Heart right ventricle (tissue), 16 donors: ENCODE measurements at regions of chr5 and their contacts with region 1.

Region 1: DNA sequence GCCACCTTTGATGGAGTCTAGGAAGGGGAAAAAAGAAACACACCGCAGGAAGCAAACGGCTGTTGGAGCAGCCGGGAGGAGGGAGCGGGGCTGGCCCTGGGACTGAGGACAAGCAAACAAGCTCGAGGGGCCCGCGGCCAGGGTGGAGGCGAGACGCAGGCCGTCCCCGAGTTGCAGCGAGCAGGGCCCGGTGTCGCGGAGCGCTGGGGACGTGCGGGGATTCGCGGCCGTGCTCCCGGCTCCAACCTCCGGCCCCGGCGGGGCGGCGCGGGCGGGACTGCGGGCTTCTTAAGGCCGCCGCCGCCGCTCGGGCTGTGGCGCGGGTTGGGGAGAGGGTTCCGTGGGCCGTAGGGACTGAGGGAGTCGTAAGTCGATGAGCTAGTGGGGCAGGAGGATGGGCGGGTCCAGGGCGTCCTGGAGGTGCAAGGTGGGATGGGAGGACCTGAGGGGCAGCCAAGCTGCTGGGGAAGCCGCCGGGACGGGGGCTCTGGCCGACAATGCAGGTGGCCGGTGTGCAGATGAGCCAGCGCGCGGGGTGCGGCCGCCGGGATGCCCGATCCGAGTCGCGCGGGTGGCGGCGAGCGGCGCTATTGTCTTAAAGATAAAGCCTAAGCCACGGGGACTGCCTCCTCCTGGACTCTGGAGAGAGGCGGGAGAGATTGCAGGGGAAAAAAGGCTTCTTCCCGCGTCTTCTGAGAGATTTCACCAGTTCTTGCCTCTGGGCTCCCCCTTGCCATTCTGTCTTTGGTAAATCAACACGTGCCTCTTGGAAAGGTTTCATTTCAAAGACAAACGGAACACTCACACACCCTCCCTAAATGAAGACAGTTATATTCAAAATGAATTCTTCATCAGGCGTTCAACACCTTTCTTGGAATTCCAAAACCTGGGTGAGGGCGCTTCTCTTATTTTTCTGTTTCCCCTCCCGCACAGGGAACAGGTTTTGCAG is 1.6 kb upstream of the HAPLN1 start:
- DNase-seq: peak; percentile 46 to 51
- ATAC-seq: peak; percentile 68 to 89 (median 78)
- H3K4me3 ChIP-seq: peak overlapping the region; percentile 36 to 63 (median 52)
- H3K27ac ChIP-seq: peak overlapping the region in 5 of 10 donors; percentile 44 to 75 (median 57)
- H3K4me1 ChIP-seq: peaks cover 0 to 12% (median 9%) of the 10 kb centered on the region in 9 donors
- H3K27me3 ChIP-seq: peaks cover 0 to 76% (median 41%) of the 10 kb centered on the region in 7 donors
- CTCF ChIP-seq: peak in 7 of 9 donors; percentile 17 to 52 (median 32)

Region 2: GRCh38 chr5:83645936-83646335 is 76.3 kb before region 1 on chr5:
- intact Hi-C with region 1: no loop called
- DNase-seq: no peak
- ATAC-seq: no peak
- H3K4me3 ChIP-seq: no peak overlapping the region
- H3K27ac ChIP-seq: no peak overlapping the region
- H3K4me1 ChIP-seq: no peaks in the 10 kb centered on the region
- H3K27me3 ChIP-seq: no peaks in the 10 kb centered on the region
- CTCF ChIP-seq: no peak

Region 3: DNA sequence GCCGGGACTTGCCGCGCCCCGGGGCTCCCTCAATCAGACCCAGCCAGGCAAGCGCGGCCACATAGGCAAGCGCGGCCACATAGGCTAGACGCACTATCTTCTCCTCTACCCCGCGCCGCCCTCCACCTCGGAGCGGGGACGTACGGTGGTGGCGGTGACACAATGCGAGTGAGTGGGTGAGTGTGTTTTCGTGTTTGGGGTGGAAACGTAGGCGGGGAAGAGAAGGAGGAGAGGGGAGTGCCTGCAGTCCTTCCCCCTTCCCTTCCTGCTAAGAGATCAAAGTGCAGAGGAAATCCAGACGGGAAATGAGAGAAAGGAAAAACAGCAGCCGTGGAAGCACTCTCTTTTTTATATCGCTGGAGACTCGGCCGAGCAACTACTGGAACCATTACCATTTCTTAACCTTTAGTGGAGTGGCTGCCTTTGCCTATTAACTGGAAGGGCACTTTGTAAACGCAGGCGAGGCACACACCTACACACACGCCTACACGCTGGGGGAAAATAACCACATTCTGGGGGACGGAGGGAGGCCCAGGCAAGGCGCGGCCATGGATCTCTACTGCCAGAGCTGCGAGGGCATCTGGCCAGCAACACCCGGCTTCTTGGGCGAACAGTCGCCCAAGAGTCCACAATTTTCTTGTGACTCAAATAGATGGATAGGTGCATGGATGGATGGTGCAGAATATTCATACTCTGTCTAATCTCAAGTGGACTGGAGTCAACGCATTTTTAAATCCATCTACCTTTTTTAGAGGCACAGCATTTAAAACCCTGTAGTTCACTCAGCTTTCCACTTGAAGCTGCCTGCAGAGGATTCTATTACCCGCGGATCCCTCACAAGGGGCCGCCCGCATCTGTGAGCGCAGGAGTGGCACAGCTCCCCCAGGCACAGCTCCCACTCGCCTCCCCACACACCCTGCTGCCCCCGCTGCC is 660.4 kb after region 1 on chr5:
- intact Hi-C with region 1: loop called in 1 of 10 experiments (anchors 5 kb)
- DNase-seq: peak; percentile 6 to 24
- ATAC-seq: peak; percentile 29 to 71 (median 64)
- H3K4me3 ChIP-seq: peak overlapping the region; percentile 18 to 57 (median 53)
- H3K27ac ChIP-seq: peak overlapping the region in 8 of 10 donors; percentile 15 to 70 (median 56)
- H3K4me1 ChIP-seq: peaks cover 0 to 23% (median 5%) of the 10 kb centered on the region in 9 donors
- H3K27me3 ChIP-seq: peaks cover 0 to 75% (median 50%) of the 10 kb centered on the region in 7 donors
- CTCF ChIP-seq: no peak